Heart right ventricle (tissue), 16 donors: ENCODE measurements at regions of chr13 and their contacts with region 1.

Region 1: DNA sequence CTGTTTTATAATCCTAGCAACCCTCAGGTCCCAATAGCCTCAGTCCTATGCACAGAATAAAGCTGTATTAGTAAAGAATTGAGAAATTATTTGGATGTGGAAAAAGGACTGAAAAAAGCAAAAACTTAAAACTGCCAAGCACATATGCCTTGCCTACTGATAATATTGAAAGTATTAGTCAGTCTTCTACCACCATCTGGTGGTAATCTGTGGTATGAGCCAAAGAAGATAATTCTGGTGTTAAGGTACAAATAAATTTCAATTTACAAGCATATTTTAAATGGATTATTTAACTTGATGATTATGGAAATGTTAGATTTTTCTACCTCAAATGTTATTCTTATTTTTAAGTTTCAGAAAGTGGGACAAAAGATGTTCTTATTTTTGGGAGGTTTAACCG is 460.3 kb upstream of the KLHL1 start:
- DNase-seq: no peak
- ATAC-seq: no peak
- H3K4me3 ChIP-seq: no peak overlapping the region
- H3K27ac ChIP-seq: no peak overlapping the region
- H3K4me1 ChIP-seq: no peaks in the 10 kb centered on the region
- H3K27me3 ChIP-seq: no peaks in the 10 kb centered on the region
- CTCF ChIP-seq: peak in 8 of 9 donors; percentile 23 to 72 (median 64)

Region 2: DNA sequence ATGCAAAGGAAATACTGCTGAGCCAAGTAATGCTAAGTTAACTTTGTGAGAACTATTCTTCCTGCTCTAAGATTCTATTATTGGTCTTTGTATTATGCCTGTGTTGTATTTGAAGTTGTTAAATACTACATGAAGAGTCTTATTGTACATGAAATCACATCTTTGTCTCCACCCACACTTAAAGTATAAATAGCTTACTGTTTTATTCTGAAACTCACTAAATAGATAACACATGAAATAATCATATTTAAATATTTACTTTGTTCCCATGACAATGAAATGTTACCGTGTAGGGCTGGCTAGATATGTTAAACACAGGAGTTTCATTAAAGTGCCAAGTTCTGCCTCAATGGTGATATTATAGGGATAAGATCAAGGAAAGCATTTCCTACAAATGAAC is 1023.0 kb before region 1 on chr13:
- intact Hi-C with region 1: loop called in 2 of 10 experiments (anchors 5 to 10 kb)
- DNase-seq: no peak
- ATAC-seq: no peak
- H3K4me3 ChIP-seq: no peak overlapping the region
- H3K27ac ChIP-seq: no peak overlapping the region
- H3K4me1 ChIP-seq: no peaks in the 10 kb centered on the region
- H3K27me3 ChIP-seq: no peaks in the 10 kb centered on the region
- CTCF ChIP-seq: no peak

Region 3: DNA sequence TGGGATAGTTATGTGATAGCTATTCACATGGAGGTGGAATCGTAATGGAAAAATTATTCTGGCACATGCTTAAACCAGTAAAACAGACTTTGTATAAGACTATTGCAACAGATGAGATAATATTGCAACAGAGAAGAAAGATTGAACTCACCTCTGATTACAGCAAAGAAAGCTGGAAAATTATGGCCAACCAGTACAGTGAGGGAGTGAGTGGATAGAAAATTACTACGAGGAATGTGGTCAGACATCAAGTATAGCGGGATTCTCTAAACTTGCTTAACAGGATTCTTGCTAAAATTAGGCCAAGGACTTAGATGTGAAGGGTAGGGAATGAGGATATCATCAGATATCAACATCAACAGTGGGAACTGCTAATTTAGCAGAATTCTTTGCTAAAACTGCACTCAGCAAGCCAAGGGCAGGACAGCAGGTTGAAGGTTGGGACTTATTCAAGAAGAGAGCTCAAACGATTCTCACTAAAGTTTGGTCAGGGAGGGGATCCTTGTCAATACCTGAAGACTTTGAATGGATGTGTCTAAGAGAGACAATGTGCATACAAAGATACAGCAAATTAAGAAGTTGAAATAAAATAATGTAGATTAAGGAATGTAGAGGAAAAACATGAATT is 62.6 kb before region 1 on chr13:
- intact Hi-C with region 1: no loop called
- DNase-seq: no peak
- ATAC-seq: no peak
- H3K4me3 ChIP-seq: no peak overlapping the region
- H3K27ac ChIP-seq: no peak overlapping the region
- H3K4me1 ChIP-seq: no peaks in the 10 kb centered on the region
- H3K27me3 ChIP-seq: no peaks in the 10 kb centered on the region
- CTCF ChIP-seq: no peak

Region 4: GRCh38 chr13:70541451-70541850 is 27.1 kb before region 1 on chr13:
- intact Hi-C with region 1: no loop called
- DNase-seq: no peak
- ATAC-seq: no peak
- H3K4me3 ChIP-seq: no peak overlapping the region
- H3K27ac ChIP-seq: no peak overlapping the region
- H3K4me1 ChIP-seq: no peaks in the 10 kb centered on the region
- H3K27me3 ChIP-seq: no peaks in the 10 kb centered on the region
- CTCF ChIP-seq: no peak